ENCODE measurements at regions of chr17 and their contacts with region 1.

Region 1: DNA sequence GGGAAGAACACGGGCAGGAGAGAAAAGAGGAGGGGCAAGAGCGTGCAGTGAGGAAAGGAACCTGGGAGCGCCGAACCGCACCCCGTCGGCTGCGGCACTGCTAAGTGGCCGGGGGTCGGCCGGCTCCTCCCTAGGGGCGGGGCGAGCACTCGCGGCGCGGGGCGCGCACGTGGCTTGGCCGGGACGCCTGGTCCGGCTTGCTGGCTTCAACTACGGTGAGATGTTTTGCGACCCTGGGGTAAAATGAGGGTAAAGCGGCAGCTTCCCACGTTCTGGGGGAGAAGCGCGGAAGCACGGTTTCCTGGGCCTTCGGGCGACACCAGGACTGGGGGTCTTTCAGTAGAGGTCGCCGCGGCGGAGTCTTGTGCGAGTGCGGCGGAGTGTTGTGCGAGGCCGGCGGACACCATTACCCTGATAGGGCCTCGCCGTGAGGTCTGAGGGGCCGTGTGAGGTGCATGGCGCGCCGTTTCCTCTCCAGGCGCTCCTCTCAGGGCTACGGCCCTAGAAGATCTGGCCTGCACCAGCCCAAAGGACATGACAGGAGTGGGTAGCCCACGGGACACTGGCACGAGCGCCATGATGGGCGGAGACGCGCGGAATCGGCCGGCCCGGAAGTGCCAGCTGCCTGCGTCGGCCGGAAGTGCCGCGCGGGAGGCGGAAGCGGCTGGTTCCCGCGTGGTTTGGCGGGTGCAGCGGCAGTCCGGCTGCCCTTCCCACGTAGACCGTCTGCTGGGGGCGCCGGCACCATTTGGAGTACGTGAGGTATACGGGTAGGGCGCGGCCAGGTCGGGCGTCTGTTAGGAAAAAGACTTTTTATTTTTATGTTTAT is at the starts of genes MYO19 and PIGW:
- DNase-seq: peak; percentile 83

Region 2: DNA sequence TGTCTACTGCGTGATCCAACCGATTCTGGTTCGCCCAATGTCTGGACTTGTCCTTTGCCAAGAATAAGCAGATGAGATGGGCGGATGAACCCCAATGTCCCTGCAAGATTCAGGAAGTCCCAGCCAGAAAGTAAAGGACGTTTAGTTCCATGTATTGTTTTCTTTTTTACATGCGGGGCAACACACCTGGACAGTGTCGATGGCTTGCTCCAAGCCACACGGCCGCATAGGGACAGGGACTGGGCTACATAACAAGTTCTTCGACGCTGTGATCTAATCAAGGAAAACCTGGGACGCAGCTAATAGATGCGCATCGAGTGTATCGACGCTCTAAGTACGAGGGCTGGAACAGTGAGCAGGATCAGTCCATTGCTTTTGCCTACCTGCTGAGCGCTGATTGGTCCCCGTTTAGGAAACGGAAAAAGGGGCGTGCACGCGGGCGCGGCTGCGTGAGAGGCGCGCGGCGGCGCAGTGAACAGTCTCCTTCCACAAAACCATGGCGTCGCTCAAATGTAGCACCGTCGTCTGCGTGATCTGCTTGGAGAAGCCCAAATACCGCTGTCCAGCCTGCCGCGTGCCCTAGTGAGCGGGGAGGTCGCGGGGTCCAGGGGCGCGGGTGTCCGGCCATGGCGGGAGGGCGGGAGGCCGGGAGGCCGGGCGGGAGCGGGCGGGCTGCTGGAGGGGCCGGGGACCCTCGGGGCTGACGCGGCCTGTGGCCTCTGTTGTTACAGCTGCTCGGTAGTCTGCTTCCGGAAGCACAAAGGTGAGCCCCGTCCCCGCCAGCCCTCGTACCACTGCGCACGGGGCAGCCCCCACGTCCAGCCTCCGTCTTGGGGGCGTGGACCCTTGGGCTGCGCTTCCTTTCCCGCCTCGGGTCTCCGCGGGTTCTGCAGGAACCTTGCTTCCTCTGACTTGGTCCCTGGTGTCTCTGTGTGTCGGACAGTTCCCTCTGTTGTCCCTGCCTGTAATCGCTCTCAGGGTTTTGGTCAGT is 48.6 kb before region 1 on chr17 and contains the start of gene ZNHIT3:
- CTCF ChIA-PET with region 1: interaction called, 6 read pairs
- POLR2A ChIA-PET with region 1: interaction called, 13 read pairs
- DNase-seq: peak; percentile 82

Region 3: GRCh38 chr17:36524428-36524876 is 10.6 kb before region 1 on chr17:
- CTCF ChIA-PET with region 1: no interaction called
- POLR2A ChIA-PET with region 1: interaction called, 10 read pairs
- DNase-seq: no peak

Region 4: DNA sequence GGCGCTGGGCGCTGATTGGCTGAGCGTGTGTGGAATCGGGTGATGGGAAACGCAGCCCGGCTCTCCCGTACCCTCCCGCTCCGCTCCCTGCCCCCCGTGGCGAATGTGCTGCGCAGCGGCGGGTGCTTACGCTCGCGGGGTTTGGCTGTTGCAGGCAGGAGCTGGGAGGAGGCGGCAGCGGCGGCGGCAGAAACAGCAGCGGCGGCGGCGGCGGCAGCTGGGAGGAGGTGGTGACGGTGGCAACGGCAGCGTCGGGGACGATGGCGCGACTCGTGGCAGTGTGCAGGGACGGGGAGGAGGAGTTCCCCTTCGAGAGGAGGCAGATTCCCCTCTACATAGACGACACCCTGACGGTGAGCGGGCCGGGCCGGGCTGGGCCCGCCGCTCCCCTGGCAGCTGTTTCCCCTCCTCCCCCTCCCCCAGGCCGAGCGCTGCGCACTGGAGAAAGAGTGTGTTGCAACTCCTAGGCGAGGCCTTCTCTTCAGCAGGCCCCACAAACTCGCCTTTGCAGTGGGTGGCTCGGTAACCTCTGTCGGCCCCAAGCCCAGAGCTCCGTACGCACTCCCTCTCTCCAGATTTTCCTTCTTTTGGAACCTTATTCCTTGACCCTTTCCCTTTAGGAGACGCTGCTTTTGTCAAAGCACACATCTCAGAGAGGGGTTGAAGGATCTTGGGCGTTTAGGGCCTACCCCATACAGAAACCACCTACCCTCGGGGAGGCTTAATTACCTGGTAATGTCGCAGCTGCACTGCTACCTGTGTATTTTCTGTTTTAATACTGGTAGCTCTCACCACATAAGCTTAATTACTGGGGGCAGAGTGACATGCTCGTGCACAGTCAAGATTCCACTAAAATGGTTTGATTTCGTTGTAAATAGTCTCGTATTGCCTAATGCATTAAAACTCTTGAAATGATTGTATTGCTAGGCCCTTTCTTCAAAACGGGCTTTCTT is 10.7 kb after region 1 on chr17:
- CTCF ChIA-PET with region 1: interaction called, 7 read pairs
- POLR2A ChIA-PET with region 1: interaction called, 88 read pairs
- DNase-seq: peak; percentile 84

Region 5: GRCh38 chr17:36550491-36551417 is 15.7 kb after region 1 on chr17:
- CTCF ChIA-PET with region 1: interaction called, 7 read pairs
- POLR2A ChIA-PET with region 1: interaction called, 88 read pairs
- DNase-seq: no peak

Region 6: DNA sequence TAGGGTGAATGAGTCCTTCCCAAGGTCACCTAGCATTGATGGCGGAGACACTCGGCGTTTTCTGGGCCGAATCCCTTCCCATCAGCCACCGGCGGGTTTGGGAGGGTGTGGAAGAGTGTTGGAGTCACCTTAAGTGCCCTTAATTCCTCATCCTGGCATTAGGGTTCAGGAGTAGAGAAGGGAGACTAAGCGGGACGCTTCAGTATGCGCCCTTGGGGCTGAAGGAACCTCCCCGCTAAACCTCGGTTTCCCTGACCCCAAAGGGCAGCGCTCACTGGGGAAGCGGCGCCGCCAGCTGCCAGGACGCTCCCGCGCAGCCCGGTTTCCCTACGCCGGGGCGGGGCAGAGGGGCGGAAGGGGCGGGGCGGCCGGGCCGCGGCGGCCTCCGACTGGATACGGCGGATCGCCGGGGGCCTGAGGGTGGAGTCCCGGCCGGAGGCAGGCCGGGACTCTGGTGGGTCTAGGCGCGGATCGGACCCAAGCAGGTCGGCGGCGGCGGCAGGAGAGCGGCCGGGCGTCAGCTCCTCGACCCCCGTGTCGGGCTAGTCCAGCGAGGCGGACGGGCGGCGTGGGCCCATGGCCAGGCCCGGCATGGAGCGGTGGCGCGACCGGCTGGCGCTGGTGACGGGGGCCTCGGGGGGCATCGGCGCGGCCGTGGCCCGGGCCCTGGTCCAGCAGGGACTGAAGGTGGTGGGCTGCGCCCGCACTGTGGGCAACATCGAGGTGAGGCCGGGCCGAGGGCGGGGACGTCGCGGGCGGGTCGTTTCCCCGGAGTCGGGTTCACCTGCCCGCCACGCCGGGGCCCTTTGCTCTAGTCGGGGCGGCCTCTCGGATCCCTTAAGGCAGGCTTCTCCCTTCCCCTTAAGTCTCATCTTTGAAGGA is 56.6 kb after region 1 on chr17 and contains the start of gene DHRS11:
- CTCF ChIA-PET with region 1: no interaction called
- POLR2A ChIA-PET with region 1: interaction called, 11 read pairs
- DNase-seq: peak; percentile 84

Region 7: DNA sequence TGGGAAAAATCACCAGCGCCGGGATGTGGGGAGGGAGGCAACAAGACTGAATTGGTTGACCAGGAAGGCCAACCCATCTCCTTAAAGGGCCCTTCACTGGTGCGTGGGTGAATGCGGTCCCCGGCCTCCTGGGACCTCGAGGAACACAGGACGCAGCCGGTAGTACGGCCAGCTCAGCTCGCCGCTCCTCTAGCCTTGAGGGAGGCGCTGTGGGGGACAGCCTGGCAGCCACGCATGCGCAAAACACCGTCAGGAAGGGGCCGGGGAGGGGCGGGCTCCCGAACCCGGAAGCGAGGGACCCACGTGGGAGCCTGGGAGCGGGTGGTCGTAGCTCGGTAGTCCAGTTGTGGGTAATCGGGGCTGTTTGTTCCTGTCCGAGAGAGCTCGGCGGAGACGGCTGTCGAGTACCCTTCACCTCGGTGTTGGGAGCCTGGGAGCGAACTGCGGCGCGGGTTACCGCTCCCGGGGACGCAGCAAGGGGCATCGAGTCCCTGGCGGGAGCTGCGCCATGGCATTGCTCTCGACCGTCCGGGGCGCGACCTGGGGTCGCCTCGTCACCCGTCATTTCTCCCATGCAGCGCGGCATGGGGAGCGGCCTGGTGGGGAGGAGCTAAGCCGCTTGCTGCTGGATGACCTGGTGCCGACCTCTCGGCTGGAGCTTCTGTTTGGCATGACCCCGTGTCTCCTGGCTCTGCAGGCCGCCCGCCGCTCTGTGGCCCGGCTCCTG is 66.4 kb after region 1 on chr17 and contains the start of gene MRM1:
- CTCF ChIA-PET with region 1: no interaction called
- POLR2A ChIA-PET with region 1: interaction called, 13 read pairs
- DNase-seq: peak; percentile 87

Region 8: GRCh38 chr17:36629252-36629847 is 94.3 kb after region 1 on chr17:
- CTCF ChIA-PET with region 1: no interaction called
- POLR2A ChIA-PET with region 1: no interaction called
- DNase-seq: peak; percentile 74